Heart right ventricle (tissue), 16 donors: ENCODE measurements at regions of chr2 and their contacts with region 1.

Region 1: GRCh38 chr2:38264396-38265281 is 112.4 kb downstream of the ATL2 start:
- DNase-seq: no peak
- ATAC-seq: peak in 3 of 8 donors; percentile 12 to 34 (median 28)
- H3K4me3 ChIP-seq: no peak overlapping the region
- H3K27ac ChIP-seq: peak overlapping the region in 6 of 10 donors; percentile 17 to 68 (median 48)
- H3K4me1 ChIP-seq: peaks cover 0 to 38% (median 0%) of the 10 kb centered on the region in 9 donors
- H3K27me3 ChIP-seq: no peaks in the 10 kb centered on the region
- CTCF ChIP-seq: no peak

Region 2: DNA sequence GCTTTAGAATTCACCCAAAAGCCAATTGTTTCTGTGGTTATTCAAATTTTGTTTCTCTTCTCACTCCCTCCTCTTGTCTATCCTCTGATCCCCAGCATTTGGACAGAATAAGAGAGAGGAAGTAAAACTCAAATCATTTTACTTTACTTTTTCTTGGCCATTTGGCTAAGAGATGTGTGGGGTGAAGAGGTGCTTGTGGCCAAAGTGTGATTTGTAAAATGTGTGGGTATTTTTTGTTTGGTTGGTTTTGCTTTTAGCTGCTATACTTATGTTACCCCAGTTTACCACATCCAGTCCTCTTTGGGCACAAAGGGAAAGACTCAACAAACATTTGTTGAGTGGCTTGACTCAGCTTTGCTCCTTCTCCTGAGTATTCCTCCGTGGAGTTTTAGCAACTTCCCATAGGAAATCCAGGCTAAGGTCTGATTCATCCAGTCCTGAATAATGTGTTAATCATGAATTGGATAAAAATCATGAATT is 79.6 kb before region 1 on chr2:
- intact Hi-C with region 1: loop called in 1 of 10 experiments (anchors 10 kb)
- DNase-seq: no peak
- ATAC-seq: peak in 1 of 8 donors; percentile 76
- H3K4me3 ChIP-seq: no peak overlapping the region
- H3K27ac ChIP-seq: peak overlapping the region in 6 of 10 donors; percentile 10 to 67 (median 31)
- H3K4me1 ChIP-seq: peaks cover 0 to 32% (median 6%) of the 10 kb centered on the region in 9 donors
- H3K27me3 ChIP-seq: no peaks in the 10 kb centered on the region
- CTCF ChIP-seq: no peak

Region 3: DNA sequence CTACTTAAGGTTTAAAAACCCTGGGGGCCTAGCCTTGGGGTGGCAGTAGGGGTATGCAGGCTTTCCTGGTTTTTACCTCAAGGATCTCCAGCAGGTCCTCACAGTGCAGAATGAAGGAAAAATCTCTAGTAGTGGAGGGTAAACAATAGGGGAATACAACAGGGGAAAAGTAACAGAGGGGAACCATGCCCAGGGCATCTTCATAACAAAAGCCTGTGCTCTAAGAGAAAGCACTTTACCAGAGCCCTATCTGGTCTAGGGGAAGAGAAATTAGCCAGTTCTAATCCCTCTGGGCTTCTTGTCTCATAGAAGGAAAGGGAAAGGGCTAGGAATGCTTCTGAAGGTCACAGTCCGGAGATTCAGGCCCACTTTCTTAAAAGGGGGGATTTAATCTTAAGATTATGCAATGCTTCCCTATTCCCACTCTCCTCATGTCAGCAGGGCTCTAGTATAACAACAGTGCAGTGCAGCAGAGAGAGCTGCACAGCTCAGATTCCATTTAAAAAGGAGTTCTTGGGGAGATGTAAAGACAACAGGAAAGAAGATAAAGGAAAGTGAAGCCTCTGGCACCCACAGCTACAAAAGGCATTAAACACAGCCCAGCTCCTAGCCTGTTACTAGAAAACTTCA is 39.7 kb before region 1 on chr2:
- intact Hi-C with region 1: no loop called
- DNase-seq: no peak
- ATAC-seq: peak in 1 of 8 donors; percentile 20
- H3K4me3 ChIP-seq: no peak overlapping the region
- H3K27ac ChIP-seq: no peak overlapping the region
- H3K4me1 ChIP-seq: no peaks in the 10 kb centered on the region
- H3K27me3 ChIP-seq: peaks cover 0 to 21% (median 4%) of the 10 kb centered on the region in 7 donors
- CTCF ChIP-seq: no peak